ENCODE measurements at regions of chr9 and their contacts with region 1.

Region 1: GRCh38 chr9:16664211-16664610 is 206.3 kb downstream of the BNC2 start:
- DNase-seq: no peak
- H3K4me3 ChIP-seq: no peak overlapping the region
- H3K27ac ChIP-seq: no peak overlapping the region
- H3K4me1 ChIP-seq: no peaks in the 10 kb centered on the region
- H3K27me3 ChIP-seq: no peaks in the 10 kb centered on the region
- CTCF ChIP-seq: no peak

Region 2: DNA sequence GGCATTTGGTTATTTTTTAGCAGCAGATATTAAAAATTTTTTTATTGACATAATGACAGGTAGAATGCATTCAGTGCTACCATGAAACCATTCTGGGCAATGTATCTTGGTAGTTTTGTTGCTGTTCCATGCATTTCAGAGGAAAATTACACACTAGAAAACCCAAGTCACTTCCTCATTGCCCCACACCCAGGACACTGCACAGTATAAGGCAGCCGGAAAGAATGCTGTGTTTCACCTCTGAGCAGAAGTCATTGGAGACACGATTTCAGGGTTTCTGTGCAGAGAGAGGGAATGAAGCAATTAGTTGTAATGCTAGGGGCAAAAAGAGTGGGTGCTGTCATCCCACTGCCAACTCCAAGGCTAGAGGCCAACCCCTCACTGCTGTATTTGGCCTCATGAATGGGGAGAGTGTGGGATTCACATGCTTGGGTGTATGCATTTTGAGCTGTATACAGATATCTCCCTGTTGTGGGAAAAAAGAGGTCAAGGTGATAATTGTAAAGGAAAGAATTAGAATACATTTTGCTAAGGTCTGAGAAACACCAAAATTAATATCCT is 84.3 kb before region 1 on chr9:
- CTCF ChIA-PET with region 1: no interaction called
- POLR2A ChIA-PET with region 1: interaction called, 15 read pairs
- intact Hi-C with region 1: no loop called
- DNase-seq: no peak
- H3K4me3 ChIP-seq: no peak overlapping the region
- H3K27ac ChIP-seq: no peak overlapping the region
- H3K4me1 ChIP-seq: no peaks in the 10 kb centered on the region
- H3K27me3 ChIP-seq: no peaks in the 10 kb centered on the region
- CTCF ChIP-seq: no peak

Region 3: DNA sequence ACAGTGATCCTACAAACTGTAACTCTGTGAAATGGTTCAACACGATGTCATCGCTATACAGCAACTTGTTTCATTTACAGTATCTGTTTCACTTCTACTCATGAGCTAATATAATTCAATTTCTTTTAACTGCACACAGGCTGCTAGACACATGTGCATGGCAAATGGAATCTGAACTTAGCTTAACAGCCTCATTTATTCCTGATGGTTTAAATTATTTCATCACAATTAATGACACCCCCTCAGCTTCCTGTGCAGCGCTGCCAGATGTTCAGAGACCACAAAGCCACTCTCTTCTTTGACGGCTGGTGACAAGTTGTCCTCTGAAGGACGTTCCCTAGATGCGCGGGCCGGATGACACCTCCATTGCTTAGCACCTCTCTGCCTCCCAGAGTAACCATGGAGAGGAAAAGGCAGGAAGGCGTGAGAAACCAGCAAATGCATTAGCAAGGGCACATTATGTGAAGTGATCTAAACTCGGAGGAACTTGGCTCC is 15.2 kb after region 1 on chr9:
- CTCF ChIA-PET with region 1: no interaction called
- POLR2A ChIA-PET with region 1: no interaction called
- intact Hi-C with region 1: no loop called
- DNase-seq: no peak
- H3K4me3 ChIP-seq: no peak overlapping the region
- H3K27ac ChIP-seq: no peak overlapping the region
- H3K4me1 ChIP-seq: no peaks in the 10 kb centered on the region
- H3K27me3 ChIP-seq: no peaks in the 10 kb centered on the region
- CTCF ChIP-seq: no peak

Region 4: DNA sequence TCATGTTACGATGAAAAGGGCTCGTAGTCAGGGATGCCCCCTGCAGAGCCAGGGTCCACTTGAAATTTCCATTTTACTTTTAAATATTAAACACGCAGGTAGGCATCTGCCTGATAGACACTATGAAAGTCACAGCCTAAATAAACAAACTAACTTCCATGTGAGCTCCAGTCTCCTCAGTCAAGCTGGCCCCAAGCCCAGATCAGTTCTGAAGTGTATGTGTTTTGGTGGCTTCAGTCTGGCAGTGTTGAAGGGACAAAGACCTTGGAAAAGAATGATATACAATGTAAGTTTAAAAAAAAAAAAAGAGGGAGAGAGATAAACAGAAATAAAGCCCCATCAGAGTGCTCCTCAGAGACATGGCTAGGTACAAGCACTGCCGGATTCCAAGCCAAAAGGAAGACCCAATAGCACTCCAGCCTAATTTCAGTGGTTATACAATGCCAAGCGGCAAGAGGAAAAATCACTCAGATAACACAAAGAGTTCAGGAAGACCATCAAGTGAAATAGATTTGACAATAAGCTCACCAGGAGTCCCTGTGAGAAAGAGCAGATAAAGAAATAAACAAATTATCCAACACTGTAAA is 25.2 kb after region 1 on chr9:
- CTCF ChIA-PET with region 1: no interaction called
- POLR2A ChIA-PET with region 1: no interaction called
- intact Hi-C with region 1: no loop called
- DNase-seq: no peak
- H3K4me3 ChIP-seq: no peak overlapping the region
- H3K27ac ChIP-seq: no peak overlapping the region
- H3K4me1 ChIP-seq: no peaks in the 10 kb centered on the region
- H3K27me3 ChIP-seq: no peaks in the 10 kb centered on the region
- CTCF ChIP-seq: no peak

Region 5: DNA sequence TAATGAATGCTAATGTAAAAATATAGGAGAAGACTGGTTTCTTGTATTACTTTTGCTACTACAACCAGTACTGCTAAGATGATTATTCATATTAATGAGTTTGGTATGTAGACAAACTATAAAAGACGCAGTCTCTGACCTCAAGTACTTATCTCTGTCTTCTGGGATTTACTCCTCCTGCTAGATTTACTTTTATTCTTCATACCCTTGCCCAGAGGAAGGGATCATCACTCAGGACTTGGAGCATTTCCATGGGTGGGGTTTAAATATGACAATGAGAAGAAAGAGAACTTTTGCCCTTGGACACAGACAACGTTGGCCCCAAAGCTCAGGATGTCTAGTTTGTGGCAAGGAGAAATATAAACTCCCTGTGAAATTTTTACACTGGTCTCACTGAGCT is 80.2 kb after region 1 on chr9:
- CTCF ChIA-PET with region 1: no interaction called
- POLR2A ChIA-PET with region 1: no interaction called
- intact Hi-C with region 1: no loop called
- DNase-seq: no peak
- H3K4me3 ChIP-seq: no peak overlapping the region
- H3K27ac ChIP-seq: no peak overlapping the region
- H3K4me1 ChIP-seq: no peaks in the 10 kb centered on the region
- H3K27me3 ChIP-seq: no peaks in the 10 kb centered on the region
- CTCF ChIP-seq: no peak

Measured in PC-9 (cell line).